ENCODE measurements at regions of chr1 and their contacts with region 1.

Region 1: GRCh38 chr1:13667691-13668090 is 32.3 kb upstream of the PRDM2 start:
- DNase-seq: no peak
- H3K4me3 ChIP-seq: no peak overlapping the region
- H3K27ac ChIP-seq: no peak overlapping the region
- H3K4me1 ChIP-seq: no peaks in the 10 kb centered on the region
- H3K27me3 ChIP-seq: no peaks in the 10 kb centered on the region
- CTCF ChIP-seq: no peak
- POLR2A ChIP-seq: no peak

Region 2: DNA sequence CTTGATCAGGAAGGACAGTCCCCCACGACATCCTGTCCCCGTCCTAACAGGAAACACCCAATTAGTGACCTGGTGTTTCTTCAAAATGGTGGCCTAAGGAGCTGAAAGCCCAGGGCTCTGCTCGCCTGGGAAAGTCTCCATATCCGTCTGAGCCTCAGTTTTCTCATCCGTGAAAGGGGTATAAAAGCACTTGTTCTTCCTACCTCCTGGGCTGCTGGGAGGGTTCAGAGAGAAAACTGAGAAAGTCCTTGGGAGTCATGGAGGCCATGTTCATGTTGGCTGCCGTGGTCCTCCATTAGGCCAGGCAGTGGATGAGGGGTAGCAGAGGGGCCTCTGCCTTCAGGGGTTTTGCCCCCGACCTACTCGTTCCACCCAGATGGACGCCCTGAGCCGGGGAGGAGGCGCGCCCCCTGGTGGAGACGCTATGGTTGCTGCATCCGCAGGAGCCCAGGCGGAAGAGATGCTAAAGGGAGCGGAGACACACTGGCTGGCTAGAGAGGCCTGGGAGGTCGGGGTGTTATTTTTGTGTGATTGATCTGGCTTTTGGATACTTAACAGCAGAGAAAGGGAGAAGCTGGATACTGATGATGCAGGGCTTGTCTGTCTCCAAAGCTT is 145.8 kb after region 1 on chr1:
- intact Hi-C with region 1: loop called (anchors 5 kb)
- DNase-seq: peak; percentile 36 to 49
- H3K4me3 ChIP-seq: no peak overlapping the region
- H3K27ac ChIP-seq: no peak overlapping the region
- H3K4me1 ChIP-seq: peaks cover 2 to 8% of the 10 kb centered on the region in 2 donors
- H3K27me3 ChIP-seq: no peaks in the 10 kb centered on the region
- CTCF ChIP-seq: peak; percentile 27 to 71 (median 51)
- POLR2A ChIP-seq: no peak

Region 3: GRCh38 chr1:13881410-13882025 is 213.8 kb after region 1 on chr1:
- intact Hi-C with region 1: no loop called
- DNase-seq: no peak
- H3K4me3 ChIP-seq: no peak overlapping the region
- H3K27ac ChIP-seq: no peak overlapping the region
- H3K4me1 ChIP-seq: no peaks in the 10 kb centered on the region
- H3K27me3 ChIP-seq: no peaks in the 10 kb centered on the region
- CTCF ChIP-seq: no peak
- POLR2A ChIP-seq: no peak

Region 4: GRCh38 chr1:14205066-14205465 is 537.4 kb after region 1 on chr1:
- intact Hi-C with region 1: no loop called
- DNase-seq: no peak
- H3K4me3 ChIP-seq: no peak overlapping the region
- H3K27ac ChIP-seq: no peak overlapping the region
- H3K4me1 ChIP-seq: no peaks in the 10 kb centered on the region
- H3K27me3 ChIP-seq: no peaks in the 10 kb centered on the region
- CTCF ChIP-seq: no peak
- POLR2A ChIP-seq: no peak